Naive thymus-derived CD4-positive, alpha-beta T cell (primary cell): ENCODE measurements at regions of chr17 and their contacts with region 1.

Region 1: DNA sequence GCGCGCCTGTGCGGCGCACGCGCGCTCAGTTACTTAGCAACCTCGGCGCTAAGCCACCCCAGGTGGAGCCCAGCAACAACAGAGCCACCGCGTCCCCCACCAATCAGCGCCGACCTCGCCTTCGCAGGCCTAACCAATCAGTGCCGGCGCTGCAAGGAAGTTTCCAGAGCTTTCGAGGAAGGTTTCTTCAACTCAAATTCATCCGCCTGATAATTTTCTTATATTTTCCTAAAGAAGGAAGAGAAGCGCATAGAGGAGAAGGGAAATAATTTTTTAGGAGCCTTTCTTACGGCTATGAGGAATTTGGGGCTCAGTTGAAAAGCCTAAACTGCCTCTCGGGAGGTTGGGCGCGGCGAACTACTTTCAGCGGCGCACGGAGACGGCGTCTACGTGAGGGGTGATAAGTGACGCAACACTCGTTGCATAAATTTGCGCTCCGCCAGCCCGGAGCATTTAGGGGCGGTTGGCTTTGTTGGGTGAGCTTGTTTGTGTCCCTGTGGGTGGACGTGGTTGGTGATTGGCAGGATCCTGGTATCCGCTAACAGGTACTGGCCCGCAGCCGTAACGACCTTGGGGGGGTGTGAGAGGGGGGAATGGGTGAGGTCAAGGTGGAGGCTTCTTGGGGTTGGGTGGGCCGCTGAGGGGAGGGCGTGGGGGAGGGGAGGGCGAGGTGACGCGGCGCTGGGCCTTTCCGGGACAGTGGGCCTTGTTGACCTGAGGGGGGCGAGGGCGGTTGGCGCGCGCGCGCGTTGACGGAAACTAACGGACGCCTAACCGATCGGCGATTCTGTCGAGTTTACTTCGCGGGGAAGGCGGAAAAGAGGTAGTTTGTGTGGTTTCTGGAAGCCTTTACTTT is at the start of gene UBB:
- DNase-seq: peak; percentile 83 to 97 (median 94)
- ATAC-seq: peak; percentile 96
- H3K4me3 ChIP-seq: peak within 1 kb of the TSS; percentile 66
- H3K4me3 Mint-ChIP-seq: peak within 1 kb of the TSS; percentile 85 to 99 (median 95)
- H3K27ac ChIP-seq: peak within 1 kb of the TSS; percentile 86
- H3K27ac Mint-ChIP-seq: peak within 1 kb of the TSS; percentile 93 to 100 (median 97)
- H3K4me1 ChIP-seq: peaks cover 6 to 13% of the 10 kb centered on the region in 2 donors
- H3K4me1 Mint-ChIP-seq: peaks cover 22 to 48% (median 39%) of the 10 kb centered on the region in 7 donors
- H3K27me3 ChIP-seq: no peaks in the 10 kb centered on the region
- H3K27me3 Mint-ChIP-seq: peaks cover 0 to 5% (median 0%) of the 10 kb centered on the region in 5 donors
- total RNA-seq, gene UBB: 537 to 1,283 (median 621) TPM

Region 2: DNA sequence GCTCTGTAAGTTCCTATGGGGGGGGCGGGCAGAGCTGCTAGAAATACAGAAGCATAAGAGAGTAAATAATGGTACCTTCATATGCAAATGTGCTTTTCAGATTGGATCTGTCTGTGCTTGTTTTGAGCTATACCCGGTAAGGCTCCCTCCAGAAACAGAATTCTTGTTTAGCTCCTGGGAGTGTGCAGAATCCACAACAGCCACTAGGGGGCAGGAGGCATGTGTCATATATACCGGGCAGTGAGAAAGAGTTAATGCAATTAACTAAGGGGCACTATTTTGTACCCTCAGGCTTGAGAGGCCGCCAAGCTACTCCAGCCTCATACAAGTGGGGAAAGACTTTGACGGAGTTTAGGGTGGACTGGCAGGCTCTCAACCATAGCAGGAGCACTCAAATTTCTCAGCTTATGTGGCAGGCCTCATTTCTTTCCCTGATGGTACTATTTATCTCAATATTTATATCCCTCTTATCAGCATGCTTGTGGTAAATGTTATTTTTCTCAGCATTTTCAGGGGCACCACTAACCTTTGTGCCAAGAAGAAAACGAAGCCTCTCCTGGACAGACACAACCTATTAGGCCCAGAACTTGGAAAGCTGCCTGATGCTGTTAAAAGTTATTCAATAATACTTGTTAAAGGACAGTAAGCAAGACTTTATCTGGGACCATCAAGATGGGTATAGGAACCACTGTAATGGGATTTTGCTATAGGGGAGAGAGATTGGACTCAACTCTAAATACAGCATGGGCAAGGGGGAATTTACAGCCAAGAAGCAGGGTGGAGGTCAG is 16.9 kb before region 1 on chr17:
- CTCF ChIA-PET with region 1: interaction called, 8 read pairs
- POLR2A ChIA-PET with region 1: interaction called, 13 read pairs
- intact Hi-C with region 1: no loop called
- DNase-seq: peak; percentile 42 to 73 (median 57)
- ATAC-seq: peak; percentile 96
- H3K4me3 ChIP-seq: no peak overlapping the region
- H3K4me3 Mint-ChIP-seq: no peak overlapping the region
- H3K27ac ChIP-seq: no peak overlapping the region
- H3K27ac Mint-ChIP-seq: no peak overlapping the region
- H3K4me1 ChIP-seq: no peaks in the 10 kb centered on the region
- H3K4me1 Mint-ChIP-seq: peaks cover 0 to 5% (median 0%) of the 10 kb centered on the region in 7 donors
- H3K27me3 ChIP-seq: no peaks in the 10 kb centered on the region
- H3K27me3 Mint-ChIP-seq: no peaks in the 10 kb centered on the region

Region 3: DNA sequence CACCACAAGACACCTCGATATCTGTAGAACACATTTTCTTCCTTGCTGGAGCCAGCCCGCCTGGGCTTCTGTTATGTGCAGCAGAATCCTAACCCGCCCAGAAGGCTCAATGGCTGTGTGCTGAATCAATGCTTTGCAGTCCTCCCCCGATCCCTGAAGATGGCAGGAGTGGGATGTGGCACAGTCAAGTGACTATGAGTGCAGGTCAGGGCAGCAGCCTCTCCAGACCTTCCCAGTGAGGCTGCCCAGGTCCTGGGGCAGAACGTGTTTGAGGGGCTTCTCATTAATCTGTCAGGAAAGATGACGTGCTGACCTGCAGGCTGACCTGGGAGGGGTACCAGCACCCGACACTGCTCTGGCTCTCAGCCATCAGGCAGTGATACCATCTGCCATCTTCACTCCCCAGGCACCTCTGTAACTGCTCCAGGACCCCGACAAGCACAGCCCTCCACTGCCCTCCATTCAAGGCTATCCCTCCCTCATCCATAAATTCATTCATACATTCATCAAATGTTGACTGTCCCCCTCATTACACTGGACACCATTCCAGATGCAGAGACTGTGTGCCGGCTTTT is 76.0 kb after region 1 on chr17:
- CTCF ChIA-PET with region 1: interaction called, 5 read pairs
- POLR2A ChIA-PET with region 1: no interaction called
- intact Hi-C with region 1: loop called in 1 of 2 experiments (anchors 5 kb)
- DNase-seq: no peak
- ATAC-seq: no peak
- H3K4me3 ChIP-seq: no peak overlapping the region
- H3K4me3 Mint-ChIP-seq: no peak overlapping the region
- H3K27ac ChIP-seq: no peak overlapping the region
- H3K27ac Mint-ChIP-seq: peak overlapping the region in 2 of 9 donors; percentile 23 to 45
- H3K4me1 ChIP-seq: no peaks in the 10 kb centered on the region
- H3K4me1 Mint-ChIP-seq: peaks cover 0 to 14% (median 7%) of the 10 kb centered on the region in 7 donors
- H3K27me3 ChIP-seq: no peaks in the 10 kb centered on the region
- H3K27me3 Mint-ChIP-seq: no peaks in the 10 kb centered on the region

Region 4: GRCh38 chr17:16506188-16506587 is 125.3 kb after region 1 on chr17:
- CTCF ChIA-PET with region 1: no interaction called
- POLR2A ChIA-PET with region 1: no interaction called
- intact Hi-C with region 1: no loop called
- DNase-seq: no peak
- ATAC-seq: no peak
- H3K4me3 ChIP-seq: no peak overlapping the region
- H3K4me3 Mint-ChIP-seq: no peak overlapping the region
- H3K27ac ChIP-seq: no peak overlapping the region
- H3K27ac Mint-ChIP-seq: no peak overlapping the region
- H3K4me1 ChIP-seq: no peaks in the 10 kb centered on the region
- H3K4me1 Mint-ChIP-seq: no peaks in the 10 kb centered on the region
- H3K27me3 ChIP-seq: no peaks in the 10 kb centered on the region
- H3K27me3 Mint-ChIP-seq: peaks cover 0 to 14% (median 0%) of the 10 kb centered on the region in 5 donors

Region 5: GRCh38 chr17:16589097-16589969 is 208.5 kb after region 1 on chr17:
- CTCF ChIA-PET with region 1: interaction called, 3 read pairs
- POLR2A ChIA-PET with region 1: interaction called, 3 read pairs
- intact Hi-C with region 1: loop called (anchors 1 to 2 kb)
- DNase-seq: peak; percentile 86 to 96 (median 92)
- ATAC-seq: peak; percentile 99
- H3K4me3 ChIP-seq: peak overlapping the region; percentile 61
- H3K4me3 Mint-ChIP-seq: peak overlapping the region; percentile 70 to 85 (median 77)
- H3K27ac ChIP-seq: peak overlapping the region; percentile 47
- H3K27ac Mint-ChIP-seq: peak overlapping the region in 5 of 9 donors; percentile 7 to 80 (median 73)
- H3K4me1 ChIP-seq: peaks cover 0 to 3% of the 10 kb centered on the region in 2 donors
- H3K4me1 Mint-ChIP-seq: peaks cover 0 to 13% (median 4%) of the 10 kb centered on the region in 7 donors
- H3K27me3 ChIP-seq: no peaks in the 10 kb centered on the region
- H3K27me3 Mint-ChIP-seq: peaks cover 23 to 61% (median 25%) of the 10 kb centered on the region in 5 donors